ENCODE measurements at regions of chr3 and their contacts with region 1.

Region 1: GRCh38 chr3:63661248-63661647 is 8.8 kb downstream of the SNTN start:
- DNase-seq: no peak
- H3K4me3 ChIP-seq: no peak overlapping the region
- H3K27ac ChIP-seq: no peak overlapping the region
- H3K4me1 ChIP-seq: peaks cover under 1% of the 10 kb centered on the region
- H3K27me3 ChIP-seq: no peaks in the 10 kb centered on the region
- CTCF ChIP-seq: peak; percentile 4 to 24

Region 2: DNA sequence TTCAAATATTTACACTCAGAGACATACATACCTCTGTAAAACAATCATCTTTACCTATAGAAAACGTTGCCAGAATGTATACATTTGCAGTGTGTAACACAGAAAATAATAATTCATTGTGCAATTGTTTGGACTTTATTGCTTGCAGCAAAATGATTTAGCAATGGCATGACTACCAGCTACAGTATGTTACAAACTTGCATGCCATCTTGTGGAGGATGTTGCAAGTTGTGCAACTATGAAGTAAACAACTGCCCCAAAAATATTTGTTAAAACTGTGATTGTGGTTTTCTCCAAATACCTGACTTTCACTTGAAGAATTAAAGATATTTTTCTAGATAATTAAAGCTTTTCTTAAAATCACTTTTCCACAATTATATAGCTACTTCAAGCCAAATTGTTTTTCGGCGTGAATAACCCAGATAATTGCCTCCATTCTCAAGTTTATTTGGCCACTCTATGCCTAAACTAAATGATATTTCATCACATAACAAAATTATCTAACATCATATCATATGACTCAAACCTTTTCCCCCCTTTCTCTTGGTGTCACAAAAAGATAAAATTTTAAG is 130.8 kb after region 1 on chr3:
- CTCF ChIA-PET with region 1: no interaction called
- dilution Hi-C with region 1: no loop called
- in situ Hi-C with region 1: no loop called
- intact Hi-C with region 1: loop called (anchors 1 kb)
- DNase-seq: peak; percentile 35
- H3K4me3 ChIP-seq: no peak overlapping the region
- H3K27ac ChIP-seq: no peak overlapping the region
- H3K4me1 ChIP-seq: no peaks in the 10 kb centered on the region
- H3K27me3 ChIP-seq: no peaks in the 10 kb centered on the region
- CTCF ChIP-seq: peak; percentile 35 to 66